MCF 10A (cell line): ENCODE measurements at regions of chr2 and their contacts with region 1.

Region 1: DNA sequence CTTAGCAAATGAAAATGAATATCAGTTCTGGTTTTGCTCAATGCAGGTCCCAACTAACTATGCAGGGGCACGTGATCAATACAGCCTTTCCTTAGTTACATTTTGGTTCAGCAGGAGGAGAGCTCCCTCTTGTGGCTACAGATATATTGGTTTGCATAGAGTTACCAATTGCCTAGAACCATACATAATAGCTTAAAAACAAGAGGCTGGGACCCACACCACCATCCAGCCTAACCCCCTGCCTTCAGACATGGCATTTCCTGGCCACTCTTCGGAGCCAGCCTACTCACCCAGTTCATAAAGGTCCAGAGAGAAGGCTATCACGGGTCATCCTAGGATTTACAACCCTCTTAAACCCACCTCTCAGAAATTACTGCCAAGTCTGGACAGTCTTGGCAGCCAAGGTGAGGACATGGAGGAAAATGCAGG is 10.5 kb downstream of the CCDC93 start:
- DNase-seq: peak; percentile 80
- H3K4me3 Mint-ChIP-seq: no peak overlapping the region
- H3K27ac Mint-ChIP-seq: no peak overlapping the region
- H3K4me1 Mint-ChIP-seq: peaks cover 4% of the 10 kb centered on the region
- H3K27me3 Mint-ChIP-seq: no peaks in the 10 kb centered on the region
- CTCF ChIP-seq: peak; percentile 68

Region 2: DNA sequence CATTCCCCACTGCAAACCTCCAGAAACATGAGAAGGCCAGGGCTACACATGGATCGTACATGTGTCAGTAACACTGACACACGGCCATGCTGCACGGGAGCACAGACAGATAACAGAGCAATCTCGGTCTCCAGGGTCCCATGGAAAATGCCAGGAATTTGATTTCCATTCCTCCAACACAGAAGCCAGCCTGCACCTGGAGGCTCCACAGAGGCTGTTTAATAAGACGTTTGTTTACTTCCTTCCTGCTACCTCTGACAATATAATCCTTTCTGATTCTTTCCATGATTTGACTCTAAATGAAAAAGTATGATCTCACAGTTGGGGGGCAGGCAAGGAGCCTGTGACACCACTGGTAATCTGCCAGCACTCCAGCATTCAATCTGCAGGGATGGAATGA is 399.8 kb before region 1 on chr2:
- CTCF ChIA-PET with region 1: no interaction called
- POLR2A ChIA-PET with region 1: no interaction called
- intact Hi-C with region 1: no loop called
- DNase-seq: no peak
- H3K4me3 Mint-ChIP-seq: no peak overlapping the region
- H3K27ac Mint-ChIP-seq: no peak overlapping the region
- H3K4me1 Mint-ChIP-seq: no peaks in the 10 kb centered on the region
- H3K27me3 Mint-ChIP-seq: no peaks in the 10 kb centered on the region
- CTCF ChIP-seq: no peak

Region 3: GRCh38 chr2:117814417-117815264 is 188.8 kb before region 1 on chr2 and contains the start of gene DDX18:
- CTCF ChIA-PET with region 1: interaction called, 82 read pairs
- POLR2A ChIA-PET with region 1: interaction called, 11 read pairs
- intact Hi-C with region 1: loop called (anchors 1 kb)
- DNase-seq: peak; percentile 99
- H3K4me3 Mint-ChIP-seq: peak within 1 kb of the TSS; percentile 87
- H3K27ac Mint-ChIP-seq: peak within 1 kb of the TSS; percentile 95
- H3K4me1 Mint-ChIP-seq: no peaks in the 10 kb centered on the region
- H3K27me3 Mint-ChIP-seq: peaks cover 10% of the 10 kb centered on the region
- CTCF ChIP-seq: peak; percentile 97
- total RNA-seq, gene DDX18: 88.7 and 101 TPM in 2 replicates

Region 4: DNA sequence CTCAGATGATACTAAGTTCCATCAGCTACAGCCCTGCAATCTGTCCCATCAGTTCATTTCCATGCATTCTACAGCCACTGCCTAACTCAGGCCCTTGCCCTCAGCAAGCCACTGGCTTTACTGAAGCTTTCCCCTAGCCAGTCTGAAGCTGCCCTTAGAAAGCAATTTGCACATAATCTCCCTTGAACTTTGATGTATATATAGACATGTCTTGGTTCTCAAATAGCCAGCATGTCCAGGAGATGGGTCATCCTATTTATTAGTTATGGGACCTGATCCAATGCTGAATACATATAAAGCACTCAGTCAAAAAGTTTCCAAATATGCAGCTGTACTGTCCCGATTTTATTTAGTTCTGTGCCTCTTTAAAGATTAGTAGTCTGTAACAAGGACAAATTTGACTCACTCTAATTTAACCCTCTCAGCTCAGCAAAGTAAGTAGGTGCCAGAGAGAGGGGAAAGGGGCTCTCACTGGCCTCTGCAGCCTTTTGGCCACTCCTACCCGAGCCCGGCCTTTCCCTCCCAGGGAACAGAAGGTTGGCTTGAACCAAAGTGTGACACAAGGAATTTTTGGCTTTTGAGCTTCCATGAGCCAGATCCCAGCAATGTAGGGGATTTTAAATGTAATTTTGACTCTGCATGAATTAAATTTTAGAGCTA is 60.3 kb before region 1 on chr2:
- CTCF ChIA-PET with region 1: interaction called, 10 read pairs
- POLR2A ChIA-PET with region 1: no interaction called
- intact Hi-C with region 1: no loop called
- DNase-seq: no peak
- H3K4me3 Mint-ChIP-seq: no peak overlapping the region
- H3K27ac Mint-ChIP-seq: no peak overlapping the region
- H3K4me1 Mint-ChIP-seq: no peaks in the 10 kb centered on the region
- H3K27me3 Mint-ChIP-seq: no peaks in the 10 kb centered on the region
- CTCF ChIP-seq: no peak

Region 5: GRCh38 chr2:117963446-117963845 is 40.0 kb before region 1 on chr2:
- CTCF ChIA-PET with region 1: interaction called, 18 read pairs
- POLR2A ChIA-PET with region 1: no interaction called
- intact Hi-C with region 1: no loop called
- DNase-seq: no peak
- H3K4me3 Mint-ChIP-seq: no peak overlapping the region
- H3K27ac Mint-ChIP-seq: no peak overlapping the region
- H3K4me1 Mint-ChIP-seq: peaks cover 7% of the 10 kb centered on the region
- H3K27me3 Mint-ChIP-seq: no peaks in the 10 kb centered on the region
- CTCF ChIP-seq: no peak

Region 6: GRCh38 chr2:118013724-118014491 is 10.5 kb after region 1 on chr2 and contains the start of gene CCDC93:
- CTCF ChIA-PET with region 1: interaction called, 51 read pairs
- POLR2A ChIA-PET with region 1: interaction called, 5 read pairs
- intact Hi-C with region 1: no loop called
- DNase-seq: peak; percentile 80
- H3K4me3 Mint-ChIP-seq: peak within 1 kb of the TSS; percentile 83
- H3K27ac Mint-ChIP-seq: peak within 1 kb of the TSS; percentile 64
- H3K4me1 Mint-ChIP-seq: peaks cover 33% of the 10 kb centered on the region
- H3K27me3 Mint-ChIP-seq: no peaks in the 10 kb centered on the region
- CTCF ChIP-seq: no peak
- total RNA-seq, gene CCDC93: 37.8 and 44.9 TPM in 2 replicates

Region 7: DNA sequence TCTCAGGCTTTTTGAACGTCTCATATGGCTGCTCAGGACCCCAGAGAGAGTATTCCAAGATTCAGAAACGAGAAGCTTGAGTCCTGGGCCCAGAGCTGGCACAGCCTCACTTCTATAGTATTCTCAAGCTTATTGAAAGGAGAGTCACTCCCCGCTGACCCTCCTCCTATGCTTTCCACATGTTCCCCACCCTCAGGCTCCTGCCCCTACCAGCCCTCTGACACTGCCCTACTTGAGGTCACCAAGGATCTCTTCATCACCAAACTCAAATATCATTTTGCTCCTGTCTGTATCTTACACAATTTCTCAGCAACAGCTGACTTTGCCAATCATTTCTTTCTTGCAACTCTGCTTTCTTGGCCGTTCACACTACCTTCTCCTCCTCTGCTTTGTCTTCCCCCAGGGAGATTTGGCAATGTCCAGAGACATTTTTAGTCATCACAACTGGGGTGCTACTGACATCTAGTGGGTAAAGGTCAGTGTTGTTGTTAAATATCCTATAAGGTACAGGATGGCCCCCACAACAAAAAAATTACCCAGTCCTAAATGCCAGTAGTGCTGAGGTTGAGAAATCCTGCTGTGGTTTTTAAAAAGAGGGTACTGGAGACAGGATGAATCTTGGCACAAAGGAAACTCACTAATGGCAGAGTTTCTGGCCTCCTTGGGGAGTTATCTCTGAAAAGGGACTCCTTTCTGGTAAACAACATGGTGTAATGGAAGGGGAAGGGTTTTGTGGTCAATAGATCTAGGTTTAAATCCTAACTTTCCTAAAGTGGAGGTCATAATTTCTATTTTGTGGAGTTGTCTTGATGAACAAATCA is 57.9 kb after region 1 on chr2:
- CTCF ChIA-PET with region 1: interaction called, 18 read pairs
- POLR2A ChIA-PET with region 1: no interaction called
- intact Hi-C with region 1: no loop called
- DNase-seq: peak; percentile 87
- H3K4me3 Mint-ChIP-seq: no peak overlapping the region
- H3K27ac Mint-ChIP-seq: no peak overlapping the region
- H3K4me1 Mint-ChIP-seq: peaks cover 6% of the 10 kb centered on the region
- H3K27me3 Mint-ChIP-seq: no peaks in the 10 kb centered on the region
- CTCF ChIP-seq: peak; percentile 33